GM12878 (cell line): ENCODE measurements at regions of chr22 and their contacts with region 1.

Region 1: DNA sequence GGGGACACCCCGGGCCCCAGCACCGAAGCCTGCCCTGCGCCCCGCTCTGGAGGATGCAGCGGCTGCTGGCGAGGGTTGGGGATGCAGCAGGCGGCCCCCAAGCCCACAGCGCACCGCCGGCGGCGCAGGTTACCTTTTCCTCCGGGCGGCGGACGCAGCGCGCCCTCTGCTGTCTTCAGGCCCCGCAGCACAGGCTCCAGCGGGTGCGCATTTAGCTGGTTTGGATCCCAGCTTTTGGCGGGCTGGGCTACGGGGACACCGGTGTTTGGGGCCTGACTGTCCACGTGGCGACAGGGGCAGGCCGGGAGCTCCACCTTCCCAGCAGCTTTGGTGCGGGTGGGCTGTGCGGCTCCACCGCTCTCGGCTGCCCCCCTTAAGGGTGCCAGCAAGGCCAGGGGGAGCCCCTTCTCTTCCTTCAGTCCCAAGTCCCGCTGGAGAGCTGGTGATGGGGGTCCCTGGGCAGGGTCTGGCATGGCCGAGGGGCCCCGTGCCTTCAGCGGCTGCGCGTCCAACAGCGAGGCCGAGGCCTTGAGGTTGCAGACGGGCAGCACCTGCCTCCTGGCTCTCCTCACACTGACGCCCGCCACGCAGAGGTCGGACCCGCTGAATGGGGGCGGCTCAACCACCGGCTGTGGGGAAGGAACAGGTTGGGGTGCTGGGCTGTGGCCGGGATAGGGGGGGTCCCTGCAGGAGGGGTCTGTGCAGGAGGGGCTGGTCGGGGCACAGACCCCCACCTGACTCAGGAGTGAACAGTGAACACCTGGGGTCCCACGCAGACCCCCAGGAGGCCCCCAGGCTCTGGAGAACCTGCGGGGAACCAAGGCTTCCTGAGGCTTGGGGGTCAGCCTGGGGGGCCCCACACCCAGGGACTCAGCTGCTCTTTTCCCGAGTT is 18.0 kb upstream of the IL17REL start:
- DNase-seq: no peak
- ATAC-seq: peak; percentile 98
- H3K4me3 ChIP-seq: no peak overlapping the region
- H3K27ac ChIP-seq: no peak overlapping the region
- H3K4me1 ChIP-seq: peaks cover 6% of the 10 kb centered on the region; the same call in 1 of the 2 replicates
- H3K27me3 ChIP-seq: peaks cover 0 to 4% of the 10 kb centered on the region in 2 experiments; a peak in 1 of 4 replicates
- CTCF ChIP-seq: peak; percentile 84 to 94 (median 94)
- EP300 ChIP-seq: no peak
- POLR2A ChIP-seq: no peak
- RAD21 ChIP-seq: peak; percentile 91

Region 2: GRCh38 chr22:49767355-49768062 is 263.0 kb before region 1 on chr22:
- CTCF ChIA-PET with region 1: interaction called, 11 read pairs
- POLR2A ChIA-PET with region 1: no interaction called
- RAD21 ChIA-PET with region 1: interaction called, 13 read pairs
- SMC1A ChIA-PET with region 1: interaction called, 6 read pairs
- in situ Hi-C with region 1: loop called (anchors 5 kb)
- intact Hi-C with region 1: loop called (anchors 1 kb)
- DNase-seq: peak; percentile 50
- ATAC-seq: peak; percentile 77
- H3K4me3 ChIP-seq: no peak overlapping the region
- H3K27ac ChIP-seq: no peak overlapping the region
- H3K4me1 ChIP-seq: no peaks in the 10 kb centered on the region
- H3K27me3 ChIP-seq: no peaks in the 10 kb centered on the region
- CTCF ChIP-seq: peak; percentile 71 to 85 (median 84)
- EP300 ChIP-seq: no peak
- POLR2A ChIP-seq: no peak
- RAD21 ChIP-seq: peak; percentile 86

Region 3: GRCh38 chr22:49930739-49931412 is 99.7 kb before region 1 on chr22:
- CTCF ChIA-PET with region 1: interaction called, 79 read pairs
- POLR2A ChIA-PET with region 1: interaction called, 4 read pairs
- RAD21 ChIA-PET with region 1: interaction called, 81 read pairs
- SMC1A ChIA-PET with region 1: interaction called, 43 read pairs
- in situ Hi-C with region 1: loop called (anchors 5 kb)
- intact Hi-C with region 1: loop called (anchors 1 kb)
- DNase-seq: peak; percentile 78
- ATAC-seq: peak; percentile 72
- H3K4me3 ChIP-seq: no peak overlapping the region
- H3K27ac ChIP-seq: no peak overlapping the region
- H3K4me1 ChIP-seq: peaks cover 55% of the 10 kb centered on the region
- H3K27me3 ChIP-seq: no peaks in the 10 kb centered on the region
- CTCF ChIP-seq: peak; percentile 74 to 96 (median 88); a peak in 5 of 6 replicates
- EP300 ChIP-seq: no peak
- POLR2A ChIP-seq: no peak
- RAD21 ChIP-seq: peak; percentile 86

Region 4: GRCh38 chr22:49970528-49971231 is 59.9 kb before region 1 on chr22:
- CTCF ChIA-PET with region 1: interaction called, 6 read pairs
- POLR2A ChIA-PET with region 1: no interaction called
- RAD21 ChIA-PET with region 1: interaction called, 14 read pairs
- SMC1A ChIA-PET with region 1: interaction called, 7 read pairs
- in situ Hi-C with region 1: no loop called
- intact Hi-C with region 1: no loop called
- DNase-seq: peak; percentile 85
- ATAC-seq: peak; percentile 84
- H3K4me3 ChIP-seq: peak overlapping the region; percentile 76
- H3K27ac ChIP-seq: peak overlapping the region; percentile 89
- H3K4me1 ChIP-seq: peaks cover 41% of the 10 kb centered on the region
- H3K27me3 ChIP-seq: no peaks in the 10 kb centered on the region
- CTCF ChIP-seq: no peak
- EP300 ChIP-seq: peak in 1 of 2 experiments; percentile 75; a peak in 3 of 4 replicates
- POLR2A ChIP-seq: peak; percentile 91
- RAD21 ChIP-seq: no peak

Region 5: GRCh38 chr22:50004918-50005317 is 25.6 kb before region 1 on chr22:
- CTCF ChIA-PET with region 1: interaction called, 11 read pairs
- POLR2A ChIA-PET with region 1: no interaction called
- RAD21 ChIA-PET with region 1: interaction called, 7 read pairs
- SMC1A ChIA-PET with region 1: interaction called, 3 read pairs
- in situ Hi-C with region 1: no loop called
- intact Hi-C with region 1: no loop called
- DNase-seq: no peak
- ATAC-seq: no peak
- H3K4me3 ChIP-seq: no peak overlapping the region
- H3K27ac ChIP-seq: no peak overlapping the region
- H3K4me1 ChIP-seq: no peaks in the 10 kb centered on the region
- H3K27me3 ChIP-seq: no peaks in the 10 kb centered on the region
- CTCF ChIP-seq: no peak
- EP300 ChIP-seq: no peak
- POLR2A ChIP-seq: no peak
- RAD21 ChIP-seq: no peak

Region 6: GRCh38 chr22:50074056-50074455 is 43.5 kb after region 1 on chr22:
- CTCF ChIA-PET with region 1: no interaction called
- POLR2A ChIA-PET with region 1: no interaction called
- RAD21 ChIA-PET with region 1: no interaction called
- SMC1A ChIA-PET with region 1: no interaction called
- in situ Hi-C with region 1: no loop called
- intact Hi-C with region 1: no loop called
- DNase-seq: no peak
- ATAC-seq: no peak
- H3K4me3 ChIP-seq: no peak overlapping the region
- H3K27ac ChIP-seq: no peak overlapping the region
- H3K4me1 ChIP-seq: no peaks in the 10 kb centered on the region
- H3K27me3 ChIP-seq: no peaks in the 10 kb centered on the region; a peak in 2 of 4 replicates
- CTCF ChIP-seq: no peak
- EP300 ChIP-seq: no peak
- POLR2A ChIP-seq: no peak
- RAD21 ChIP-seq: no peak